Esophagus muscularis mucosa (tissue), 4 donors: ENCODE measurements at regions of chr10 and their contacts with region 1.

Region 1: GRCh38 chr10:69179743-69180524 is at the start of gene SUPV3L1:
- DNase-seq: peak; percentile 97
- H3K4me3 ChIP-seq: peak within 1 kb of the TSS; percentile 75 to 97 (median 84)
- H3K27ac ChIP-seq: peak within 1 kb of the TSS; percentile 82 to 92 (median 87)
- H3K4me1 ChIP-seq: peaks cover 31 to 38% (median 33%) of the 10 kb centered on the region in 4 donors
- H3K27me3 ChIP-seq: no peaks in the 10 kb centered on the region
- CTCF ChIP-seq: peak in 1 of 3 experiments; percentile 19
- EP300 ChIP-seq: no peak
- POLR2A ChIP-seq: peak; percentile 81
- total RNA-seq, gene SUPV3L1: 15.4 to 21.9 (median 20.4) TPM

Region 2: DNA sequence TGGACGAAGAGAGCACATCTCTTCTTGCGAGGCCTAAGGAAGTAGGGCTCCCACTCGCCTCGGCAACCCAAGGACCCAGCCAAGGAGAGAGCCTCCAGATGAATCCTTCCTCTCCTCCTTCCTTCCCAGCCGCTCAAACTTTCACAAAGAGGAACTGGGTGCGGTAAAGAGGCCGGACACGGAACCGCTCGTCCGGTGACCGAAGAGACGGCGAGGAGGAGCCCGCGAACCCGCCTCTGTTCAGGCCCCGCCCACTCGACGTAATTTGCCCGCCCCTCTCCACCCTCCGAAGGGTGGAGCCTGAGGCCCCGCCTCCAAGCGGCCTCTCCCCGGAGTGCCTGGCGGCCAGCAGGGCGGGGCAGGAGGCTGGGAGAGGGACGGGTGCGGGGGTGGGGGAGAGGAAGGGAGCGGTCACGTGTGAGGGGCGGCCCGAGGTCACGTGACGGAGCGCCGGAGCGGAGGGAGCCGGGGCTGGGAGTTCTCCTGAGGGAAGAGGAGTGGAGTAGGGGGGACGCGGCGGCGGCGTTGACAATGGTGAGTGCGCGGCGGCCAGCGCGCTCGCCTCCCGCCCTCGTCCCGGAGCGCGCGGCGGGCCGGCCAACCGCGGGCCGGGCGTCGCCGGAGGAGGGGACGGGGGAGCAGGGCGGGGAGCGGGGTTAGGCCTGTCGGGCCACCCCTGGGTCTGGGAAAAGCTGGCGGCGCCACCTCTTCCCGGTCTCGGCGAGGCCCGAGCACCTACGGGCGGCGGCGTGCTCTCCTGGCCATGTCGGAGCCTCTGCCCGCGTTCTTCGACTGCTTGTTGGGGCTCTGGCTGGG is 56.0 kb before region 1 on chr10 and contains the start of gene VPS26A:
- intact Hi-C with region 1: loop called (anchors 5 kb)
- DNase-seq: peak; percentile 99
- H3K4me3 ChIP-seq: peak within 1 kb of the TSS; percentile 89 to 99 (median 94)
- H3K27ac ChIP-seq: peak within 1 kb of the TSS; percentile 95 to 99 (median 98)
- H3K4me1 ChIP-seq: peaks cover 20 to 45% (median 29%) of the 10 kb centered on the region in 4 donors
- H3K27me3 ChIP-seq: no peaks in the 10 kb centered on the region
- CTCF ChIP-seq: peak; percentile 15 to 28 (median 24)
- EP300 ChIP-seq: no peak
- POLR2A ChIP-seq: peak; percentile 85
- total RNA-seq, gene VPS26A: 31.8 to 47.3 (median 38.4) TPM

Region 3: DNA sequence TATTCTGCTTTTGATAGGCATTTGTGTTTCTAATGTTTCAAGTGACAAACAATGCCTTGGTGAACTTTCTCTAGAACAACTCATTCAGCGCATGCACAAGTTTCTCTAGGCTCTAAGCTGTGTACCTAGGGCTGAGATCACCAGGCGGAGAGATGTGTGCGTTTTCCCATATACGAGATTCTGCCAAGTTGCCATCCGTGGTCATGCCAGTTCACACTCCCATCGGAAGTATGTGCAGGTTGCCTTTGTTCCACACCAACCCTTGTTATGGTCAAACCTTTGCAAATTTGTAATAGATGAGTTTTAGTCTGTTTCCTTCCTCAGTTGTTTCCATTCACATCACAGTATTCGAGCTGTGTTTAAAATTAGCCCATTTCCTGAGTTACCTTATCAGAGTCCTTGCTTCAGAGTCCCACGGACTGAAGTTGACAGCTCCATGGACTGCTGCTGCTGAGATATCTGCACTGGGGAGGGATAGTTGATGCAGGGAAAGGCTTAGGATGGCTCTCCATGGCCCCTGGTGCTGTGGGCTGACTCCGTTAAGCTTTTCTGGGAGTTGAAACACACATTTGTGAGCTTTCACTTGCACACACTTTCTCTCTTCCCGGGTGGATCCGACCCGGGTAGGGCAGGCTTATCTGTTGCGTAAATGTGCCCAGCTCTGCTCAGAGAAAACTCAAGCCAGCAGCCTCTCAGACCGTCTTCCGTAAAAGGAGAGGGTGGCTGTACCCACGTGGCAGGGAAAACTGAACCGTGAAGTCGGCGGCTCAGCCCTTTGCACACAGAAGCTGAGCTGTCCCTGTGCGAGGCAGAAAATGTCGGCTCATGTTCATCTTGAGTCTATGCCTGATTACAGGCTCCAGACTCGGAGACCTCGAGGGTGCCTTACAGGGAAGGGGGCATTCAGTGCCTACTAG is 147.8 kb after region 1 on chr10:
- intact Hi-C with region 1: no loop called
- DNase-seq: peak; percentile 93
- H3K4me3 ChIP-seq: peak overlapping the region; percentile 29 to 45 (median 40)
- H3K27ac ChIP-seq: peak overlapping the region; percentile 81 to 88 (median 86)
- H3K4me1 ChIP-seq: peaks cover 84 to 99% (median 93%) of the 10 kb centered on the region in 4 donors
- H3K27me3 ChIP-seq: no peaks in the 10 kb centered on the region
- CTCF ChIP-seq: no peak
- EP300 ChIP-seq: no peak
- POLR2A ChIP-seq: no peak